A549 (cell line): ENCODE measurements at regions of chr7 and their contacts with region 1.

Region 1: DNA sequence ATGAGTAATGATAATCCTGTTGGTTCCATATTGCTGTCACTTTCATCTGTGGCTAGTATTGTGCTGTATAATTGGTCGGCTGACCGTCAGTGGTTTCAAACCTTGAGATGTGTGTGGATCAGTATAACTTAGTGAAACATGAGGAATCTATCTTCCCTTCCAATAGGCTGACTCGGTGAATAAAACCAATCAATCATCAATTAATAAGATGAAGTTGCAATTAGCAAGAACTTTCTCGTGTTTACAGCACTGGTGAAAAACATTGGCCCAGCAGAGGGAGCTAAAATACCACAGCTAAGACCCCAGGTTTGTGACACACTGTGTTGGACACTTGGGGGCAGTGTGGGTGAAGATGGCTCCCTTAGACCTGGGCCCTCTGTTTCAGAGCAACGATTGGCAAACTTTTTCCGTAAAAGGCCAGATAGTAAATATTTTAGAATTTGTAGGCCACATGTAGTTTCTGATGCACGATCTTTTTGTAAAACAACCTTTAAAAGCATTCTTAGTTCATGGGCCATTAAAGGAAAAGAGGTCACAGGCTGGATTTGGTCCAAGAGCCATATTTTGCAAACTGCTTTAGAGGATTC is 47.8 kb downstream of the STRA8 start:
- DNase-seq: peak; percentile 83 to 85
- ATAC-seq: peak; percentile 91 to 97
- H3K4me3 ChIP-seq: no peak overlapping the region
- H3K27ac ChIP-seq: peak overlapping the region; percentile 44 to 45; a peak in 5 of 6 replicates
- H3K4me1 ChIP-seq: peaks cover 6% of the 10 kb centered on the region; the same call in 2 of the 3 replicates
- CTCF ChIP-seq: peak; percentile 100
- EP300 ChIP-seq: no peak
- POLR2A ChIP-seq: no peak
- RAD21 ChIP-seq: peak; percentile 100

Region 2: DNA sequence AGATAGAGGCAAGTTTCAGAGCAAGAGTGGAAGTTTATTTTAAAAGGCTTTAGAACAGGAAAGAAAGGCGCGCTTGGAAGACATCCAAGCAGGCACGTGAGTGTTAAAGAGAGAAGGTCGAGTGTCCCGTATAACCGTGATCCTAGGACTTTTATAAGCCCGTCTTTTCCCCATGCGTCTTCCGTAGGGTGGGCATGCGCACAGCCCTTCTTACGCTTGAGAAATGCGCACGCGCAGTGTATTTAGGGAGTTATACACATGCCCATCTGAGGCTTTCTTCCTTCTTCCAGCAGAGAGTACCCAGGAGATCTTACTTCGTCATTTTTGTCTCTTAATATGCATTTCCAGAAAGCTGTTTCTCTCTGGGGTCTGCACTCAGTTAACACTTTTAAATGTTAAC is 449.6 kb before region 1 on chr7:
- CTCF ChIA-PET with region 1: no interaction called
- POLR2A ChIA-PET with region 1: no interaction called
- DNase-seq: no peak
- ATAC-seq: no peak
- H3K4me3 ChIP-seq: no peak overlapping the region
- H3K27ac ChIP-seq: no peak overlapping the region
- H3K4me1 ChIP-seq: no peaks in the 10 kb centered on the region
- CTCF ChIP-seq: no peak
- EP300 ChIP-seq: no peak
- POLR2A ChIP-seq: no peak
- RAD21 ChIP-seq: no peak

Region 3: GRCh38 chr7:135247746-135248471 is 33.5 kb before region 1 on chr7:
- CTCF ChIA-PET with region 1: no interaction called
- POLR2A ChIA-PET with region 1: no interaction called
- DNase-seq: no peak
- ATAC-seq: no peak; a peak in 1 of 6 replicates
- H3K4me3 ChIP-seq: no peak overlapping the region
- H3K27ac ChIP-seq: no peak overlapping the region
- H3K4me1 ChIP-seq: no peaks in the 10 kb centered on the region
- CTCF ChIP-seq: no peak
- EP300 ChIP-seq: no peak
- POLR2A ChIP-seq: no peak
- RAD21 ChIP-seq: no peak

Region 4: DNA sequence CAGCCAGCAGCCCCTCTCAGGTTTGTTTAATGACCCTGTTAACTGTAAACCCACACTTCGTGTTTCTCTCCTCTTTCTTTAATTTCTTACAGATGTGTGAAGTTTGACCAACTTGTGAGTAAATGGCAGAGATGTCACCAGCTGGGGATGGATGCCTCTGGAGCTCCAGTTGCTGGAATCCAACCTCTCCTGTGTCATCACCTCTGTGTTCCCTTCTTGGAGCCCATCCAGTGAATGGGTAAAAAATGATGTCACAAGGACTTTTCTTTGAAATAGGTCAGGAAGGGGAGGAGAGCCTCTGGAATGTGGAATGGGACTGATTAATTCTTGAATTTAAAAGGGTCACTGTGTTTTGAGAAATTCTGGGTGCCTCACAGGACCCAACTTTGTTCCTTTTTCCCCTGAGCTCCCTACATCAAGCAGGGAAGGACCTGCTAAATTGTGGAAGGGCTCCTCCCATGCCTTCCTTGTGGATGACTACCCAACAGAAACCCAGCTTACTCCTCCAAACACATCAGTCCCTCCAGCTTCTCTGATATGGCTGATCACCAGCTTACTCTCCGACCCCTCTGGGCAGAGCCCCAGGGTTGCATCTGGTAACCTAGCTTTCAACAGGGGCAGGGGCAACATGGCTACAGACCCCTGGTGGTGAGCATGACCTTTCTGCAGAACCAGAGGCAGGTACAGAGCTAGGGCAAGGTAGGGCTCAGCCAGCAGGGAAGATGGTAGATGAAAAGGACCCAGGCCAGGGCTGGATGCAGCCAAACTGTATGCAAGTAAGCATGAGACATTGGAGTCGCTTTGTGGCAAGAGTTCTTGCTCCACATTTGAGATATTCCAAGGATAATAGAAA is 19.7 kb after region 1 on chr7:
- CTCF ChIA-PET with region 1: interaction called, 20 read pairs
- POLR2A ChIA-PET with region 1: no interaction called
- DNase-seq: peak in 1 of 2 experiments; percentile 15
- ATAC-seq: peak; percentile 43 to 62; a peak in 2 of 6 replicates
- H3K4me3 ChIP-seq: no peak overlapping the region
- H3K27ac ChIP-seq: no peak overlapping the region
- H3K4me1 ChIP-seq: peaks cover 5% of the 10 kb centered on the region; the same call in 1 of the 3 replicates
- CTCF ChIP-seq: no peak
- EP300 ChIP-seq: no peak
- POLR2A ChIP-seq: no peak
- RAD21 ChIP-seq: no peak

Region 5: GRCh38 chr7:135326636-135327280 is 45.3 kb after region 1 on chr7:
- CTCF ChIA-PET with region 1: interaction called, 388 read pairs
- POLR2A ChIA-PET with region 1: no interaction called
- DNase-seq: no peak
- ATAC-seq: no peak
- H3K4me3 ChIP-seq: no peak overlapping the region
- H3K27ac ChIP-seq: no peak overlapping the region
- H3K4me1 ChIP-seq: no peaks in the 10 kb centered on the region; the same call in 2 of the 3 replicates
- CTCF ChIP-seq: no peak
- EP300 ChIP-seq: no peak
- POLR2A ChIP-seq: no peak
- RAD21 ChIP-seq: no peak

Region 6: GRCh38 chr7:135355377-135356042 is 74.1 kb after region 1 on chr7:
- CTCF ChIA-PET with region 1: interaction called, 13 read pairs
- POLR2A ChIA-PET with region 1: no interaction called
- DNase-seq: peak in 1 of 2 experiments; percentile 37
- ATAC-seq: peak in 1 of 2 experiments; percentile 68; a peak in 2 of 6 replicates
- H3K4me3 ChIP-seq: no peak overlapping the region
- H3K27ac ChIP-seq: no peak overlapping the region
- H3K4me1 ChIP-seq: peaks cover 8% of the 10 kb centered on the region; the same call in 1 of the 3 replicates
- CTCF ChIP-seq: no peak
- EP300 ChIP-seq: no peak
- POLR2A ChIP-seq: no peak
- RAD21 ChIP-seq: no peak

Region 7: DNA sequence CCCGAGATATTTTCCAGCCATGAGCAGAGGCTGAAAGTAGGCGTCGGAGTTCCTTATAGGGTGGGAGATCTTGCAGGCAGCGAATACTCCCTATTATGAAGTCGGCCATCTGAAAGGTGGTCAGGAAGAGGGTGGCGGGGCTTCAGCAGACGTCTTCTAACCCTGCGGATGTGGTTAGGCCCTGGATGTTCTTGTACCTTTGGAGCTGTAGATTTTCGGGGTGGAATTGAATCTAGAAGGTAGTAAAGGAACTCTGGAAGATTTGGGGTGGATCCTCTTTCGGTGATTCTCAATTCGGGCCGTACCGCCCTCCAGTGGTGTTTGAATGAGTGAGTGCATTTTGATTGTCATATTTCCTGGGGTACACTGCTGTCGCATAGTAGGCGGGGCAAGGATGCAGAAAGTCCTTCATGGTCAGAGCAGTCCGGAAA is 276.9 kb after region 1 on chr7:
- CTCF ChIA-PET with region 1: interaction called, 19 read pairs
- POLR2A ChIA-PET with region 1: no interaction called
- DNase-seq: peak; percentile 77 to 91
- ATAC-seq: peak; percentile 82 to 88
- H3K4me3 ChIP-seq: peak overlapping the region; percentile 76
- H3K27ac ChIP-seq: peak overlapping the region; percentile 87
- H3K4me1 ChIP-seq: peaks cover 8% of the 10 kb centered on the region; the same call in 2 of the 3 replicates
- CTCF ChIP-seq: peak; percentile 60
- EP300 ChIP-seq: no peak
- POLR2A ChIP-seq: no peak
- RAD21 ChIP-seq: peak; percentile 55 to 59